ENCODE measurements at regions of chr4 and their contacts with region 1.

Region 1: GRCh38 chr4:54363037-54363436 is 133.9 kb downstream of the PDGFRA start:
- DNase-seq: no peak
- H3K4me3 ChIP-seq: no peak overlapping the region
- H3K27ac ChIP-seq: no peak overlapping the region
- H3K4me1 ChIP-seq: no peaks in the 10 kb centered on the region
- H3K27me3 ChIP-seq: no peaks in the 10 kb centered on the region
- CTCF ChIP-seq: no peak

Region 2: DNA sequence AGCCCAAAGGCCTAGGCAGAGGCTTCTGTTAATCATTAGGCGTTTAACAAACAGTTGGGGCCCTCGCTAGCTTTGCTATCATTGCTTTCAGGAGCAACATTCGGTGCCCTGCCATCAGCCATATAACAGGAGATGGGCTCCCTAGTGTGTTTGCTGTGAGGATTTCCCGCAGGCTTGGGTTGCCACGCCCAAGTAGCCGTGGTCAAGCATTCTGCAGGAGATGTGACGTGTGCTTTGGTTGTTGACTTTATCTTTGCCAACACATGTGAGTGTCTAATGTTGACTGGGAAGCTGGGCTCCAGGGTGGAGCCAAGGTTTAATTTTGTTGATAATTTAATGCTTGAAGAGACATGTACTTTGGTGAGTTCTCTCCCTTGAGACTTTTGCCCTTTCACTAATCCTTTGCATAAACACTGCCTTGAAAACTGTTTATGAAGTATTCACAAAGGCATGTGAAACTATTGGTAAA is 110.1 kb after region 1 on chr4:
- CTCF ChIA-PET with region 1: interaction called, 10 read pairs
- dilution Hi-C with region 1: no loop called
- in situ Hi-C with region 1: no loop called
- intact Hi-C with region 1: no loop called
- DNase-seq: peak; percentile 32
- H3K4me3 ChIP-seq: no peak overlapping the region
- H3K27ac ChIP-seq: no peak overlapping the region
- H3K4me1 ChIP-seq: no peaks in the 10 kb centered on the region
- H3K27me3 ChIP-seq: peaks cover 6% of the 10 kb centered on the region
- CTCF ChIP-seq: no peak